A673 (cell line): ENCODE measurements at regions of chr5 and their contacts with region 1.

Region 1: DNA sequence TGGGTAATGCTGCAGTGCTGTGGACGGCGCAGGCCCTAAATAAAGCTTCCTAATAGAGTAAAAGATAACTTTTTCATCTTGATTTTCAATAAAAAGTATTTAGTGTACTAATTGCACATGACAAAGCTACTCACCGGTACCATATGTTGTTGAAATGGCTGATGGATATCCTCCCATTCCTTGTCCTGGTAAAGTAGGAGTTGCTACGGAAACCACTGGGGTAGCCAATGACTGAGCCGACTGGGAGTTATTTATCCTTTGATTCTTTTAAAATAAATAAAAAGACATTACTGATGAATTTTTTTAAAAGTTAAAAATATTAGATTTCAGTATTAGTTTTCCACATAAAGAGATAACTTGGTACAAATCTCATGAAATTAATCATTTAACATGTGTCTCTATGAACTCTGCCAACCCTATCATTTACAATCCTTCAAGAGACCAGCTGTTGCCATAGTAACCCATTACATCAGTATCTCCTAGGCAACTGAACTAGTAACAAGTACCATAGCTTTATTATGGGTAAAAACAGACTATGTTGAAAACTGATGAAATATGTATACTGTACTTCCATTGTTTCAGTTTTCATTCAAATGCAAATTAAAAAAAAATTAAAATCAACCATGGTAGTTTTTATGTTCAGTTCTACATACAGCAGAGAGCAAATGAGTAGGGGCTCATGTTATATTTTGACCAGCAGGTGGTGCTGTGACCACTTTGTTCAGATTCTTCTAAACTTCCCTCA is 153.7 kb downstream of the MEF2C start:
- DNase-seq: peak; percentile 83
- H3K4me3 ChIP-seq: no peak overlapping the region
- H3K27ac ChIP-seq: no peak overlapping the region
- H3K4me1 ChIP-seq: no peaks in the 10 kb centered on the region
- H3K27me3 ChIP-seq: no peaks in the 10 kb centered on the region
- CTCF ChIP-seq: peak; percentile 83

Region 2: GRCh38 chr5:88081877-88082276 is 647.4 kb before region 1 on chr5:
- CTCF ChIA-PET with region 1: no interaction called
- POLR2A ChIA-PET with region 1: no interaction called
- intact Hi-C with region 1: no loop called
- DNase-seq: no peak
- H3K4me3 ChIP-seq: no peak overlapping the region
- H3K27ac ChIP-seq: no peak overlapping the region
- H3K4me1 ChIP-seq: peaks cover 5% of the 10 kb centered on the region
- H3K27me3 ChIP-seq: no peaks in the 10 kb centered on the region
- CTCF ChIP-seq: no peak

Region 3: GRCh38 chr5:88860501-88860900 is 131.2 kb after region 1 on chr5:
- CTCF ChIA-PET with region 1: no interaction called
- POLR2A ChIA-PET with region 1: no interaction called
- intact Hi-C with region 1: no loop called
- DNase-seq: no peak
- H3K4me3 ChIP-seq: no peak overlapping the region
- H3K27ac ChIP-seq: no peak overlapping the region
- H3K4me1 ChIP-seq: no peaks in the 10 kb centered on the region
- H3K27me3 ChIP-seq: no peaks in the 10 kb centered on the region
- CTCF ChIP-seq: no peak

Region 4: DNA sequence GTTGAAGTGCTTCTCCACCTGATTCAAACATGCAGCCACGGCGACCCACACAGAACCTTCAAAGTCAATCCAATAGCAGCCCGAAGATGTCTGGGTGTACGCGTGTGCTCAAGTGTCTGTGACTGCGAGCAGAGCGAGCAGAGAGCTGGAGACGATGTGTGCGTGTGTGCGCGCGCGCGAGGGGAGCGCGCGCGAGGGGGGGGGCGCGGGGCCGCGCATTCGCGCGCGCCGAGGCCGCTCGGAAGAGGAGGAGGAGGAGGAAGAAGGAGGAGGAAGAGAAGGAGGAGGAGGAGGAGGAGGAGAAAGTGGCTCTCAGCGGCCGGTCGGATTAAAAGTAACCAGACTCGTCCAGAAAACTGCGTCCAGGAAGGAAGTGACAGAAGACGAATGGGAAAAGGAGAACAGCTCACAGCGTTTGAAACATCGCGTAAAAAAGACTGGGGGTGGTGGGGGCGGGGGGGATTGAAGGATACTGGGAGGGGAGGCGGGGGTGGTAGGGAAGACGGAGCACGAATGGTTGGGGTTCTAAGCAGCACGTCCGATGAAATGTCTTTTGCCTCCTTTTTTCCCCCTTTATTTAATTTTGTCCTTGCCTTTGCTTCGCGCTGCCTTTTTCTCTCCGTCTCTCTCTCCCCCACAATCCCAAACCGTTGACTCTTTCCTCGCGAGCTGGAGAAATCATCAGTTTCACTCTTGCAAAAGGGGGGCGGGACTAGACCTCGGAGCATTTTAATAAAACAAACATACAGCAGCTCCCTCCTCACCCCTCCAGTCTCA is 154.0 kb after region 1 on chr5 and contains the start of gene MEF2C:
- CTCF ChIA-PET with region 1: no interaction called
- POLR2A ChIA-PET with region 1: no interaction called
- intact Hi-C with region 1: loop called (anchors 2 kb)
- DNase-seq: peak; percentile 83
- H3K4me3 ChIP-seq: peak within 1 kb of the TSS; percentile 61
- H3K27ac ChIP-seq: peak within 1 kb of the TSS; percentile 55
- H3K4me1 ChIP-seq: peaks cover 12% of the 10 kb centered on the region
- H3K27me3 ChIP-seq: peaks cover 10% of the 10 kb centered on the region
- CTCF ChIP-seq: no peak
- total RNA-seq, gene MEF2C: 2.0 and 3.6 TPM in 2 replicates

Region 5: DNA sequence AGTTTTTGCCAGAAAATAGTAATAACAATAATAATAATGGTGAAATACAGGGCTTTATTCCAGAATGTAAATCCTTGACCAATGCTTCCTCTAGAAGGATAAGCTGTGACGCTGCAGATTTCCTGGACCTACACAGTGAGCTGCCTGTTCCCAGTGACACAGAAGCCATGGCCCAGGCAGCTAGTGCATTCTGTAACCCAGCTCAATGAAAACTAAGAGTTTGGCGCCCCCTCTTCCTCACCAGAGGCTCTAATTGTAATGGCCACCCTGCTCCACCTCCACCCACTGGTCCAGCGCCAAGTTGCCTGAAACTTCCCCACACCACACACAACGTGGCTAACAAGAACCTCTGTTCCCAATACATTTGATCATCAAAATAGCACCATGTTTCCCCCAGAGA is 1432.2 kb after region 1 on chr5:
- CTCF ChIA-PET with region 1: interaction called, 6 read pairs
- POLR2A ChIA-PET with region 1: no interaction called
- intact Hi-C with region 1: loop called (anchors 5 kb)
- DNase-seq: peak; percentile 76
- H3K4me3 ChIP-seq: no peak overlapping the region
- H3K27ac ChIP-seq: no peak overlapping the region
- H3K4me1 ChIP-seq: no peaks in the 10 kb centered on the region
- H3K27me3 ChIP-seq: no peaks in the 10 kb centered on the region
- CTCF ChIP-seq: peak; percentile 66

Region 6: GRCh38 chr5:90264689-90265544 is 1535.7 kb after region 1 on chr5:
- CTCF ChIA-PET with region 1: interaction called, 7 read pairs
- POLR2A ChIA-PET with region 1: no interaction called
- intact Hi-C with region 1: loop called (anchors 1 kb)
- DNase-seq: peak; percentile 78
- H3K4me3 ChIP-seq: no peak overlapping the region
- H3K27ac ChIP-seq: no peak overlapping the region
- H3K4me1 ChIP-seq: peaks cover 3% of the 10 kb centered on the region
- H3K27me3 ChIP-seq: no peaks in the 10 kb centered on the region
- CTCF ChIP-seq: peak; percentile 95

Region 7: DNA sequence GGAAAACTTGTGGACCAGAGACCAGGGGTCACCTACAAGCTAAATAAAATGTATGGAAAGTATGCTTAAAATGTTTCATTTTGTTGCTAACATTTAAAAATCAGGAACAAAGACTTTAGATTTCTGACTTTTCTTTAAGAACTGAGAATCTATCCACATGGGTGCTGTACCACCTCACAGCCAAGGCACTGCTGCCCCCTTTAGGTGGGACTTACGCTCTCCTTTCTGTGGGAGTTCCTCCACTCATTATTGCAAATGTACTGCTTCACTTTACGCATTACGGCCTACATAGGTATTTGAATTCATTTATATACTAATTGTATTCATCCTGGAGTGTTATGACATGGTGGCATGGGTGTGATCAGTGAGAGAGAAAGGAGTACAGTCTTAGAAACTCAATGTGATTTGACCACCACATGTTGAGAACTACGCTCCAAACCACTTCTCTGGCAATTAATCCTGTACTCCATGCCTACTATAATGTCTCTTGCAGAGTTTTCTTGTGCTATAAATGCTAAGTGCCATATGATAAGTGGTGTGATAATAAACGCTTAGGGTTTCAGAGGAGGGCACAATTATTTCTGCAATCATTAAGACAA is 1705.0 kb after region 1 on chr5:
- CTCF ChIA-PET with region 1: no interaction called
- POLR2A ChIA-PET with region 1: no interaction called
- intact Hi-C with region 1: loop called (anchors 5 kb)
- DNase-seq: peak; percentile 67
- H3K4me3 ChIP-seq: no peak overlapping the region
- H3K27ac ChIP-seq: no peak overlapping the region
- H3K4me1 ChIP-seq: no peaks in the 10 kb centered on the region
- H3K27me3 ChIP-seq: no peaks in the 10 kb centered on the region
- CTCF ChIP-seq: peak; percentile 89